ENCODE measurements at regions of chr11 and their contacts with region 1.

Region 1: GRCh38 chr11:85854557-85855340 is 434 bp upstream of the CCDC83 start:
- DNase-seq: peak; percentile 90
- ATAC-seq: peak; percentile 99
- H3K4me3 ChIP-seq: peak overlapping the region; percentile 90
- H3K27ac ChIP-seq: peak overlapping the region; percentile 98
- H3K4me1 ChIP-seq: peaks cover 7% of the 10 kb centered on the region
- H3K27me3 ChIP-seq: no peaks in the 10 kb centered on the region
- CTCF ChIP-seq: peak; percentile 82
- POLR2A ChIP-seq: peak; percentile 69
- RAD21 ChIP-seq: peak; percentile 93

Region 2: GRCh38 chr11:85096939-85097338 is 757.8 kb before region 1 on chr11:
- CTCF ChIA-PET with region 1: no interaction called
- POLR2A ChIA-PET with region 1: no interaction called
- dilution Hi-C with region 1: no loop called
- in situ Hi-C with region 1: no loop called
- intact Hi-C with region 1: no loop called
- DNase-seq: no peak
- ATAC-seq: no peak
- H3K4me3 ChIP-seq: no peak overlapping the region
- H3K27ac ChIP-seq: no peak overlapping the region
- H3K4me1 ChIP-seq: no peaks in the 10 kb centered on the region
- H3K27me3 ChIP-seq: no peaks in the 10 kb centered on the region
- CTCF ChIP-seq: no peak
- POLR2A ChIP-seq: no peak
- RAD21 ChIP-seq: no peak

Region 3: GRCh38 chr11:85694386-85694980 is 160.3 kb before region 1 on chr11:
- CTCF ChIA-PET with region 1: interaction called, 6 read pairs
- POLR2A ChIA-PET with region 1: no interaction called
- dilution Hi-C with region 1: no loop called
- in situ Hi-C with region 1: no loop called
- intact Hi-C with region 1: loop called (anchors 2 kb)
- DNase-seq: peak; percentile 71
- ATAC-seq: peak; percentile 69
- H3K4me3 ChIP-seq: no peak overlapping the region
- H3K27ac ChIP-seq: peak overlapping the region; percentile 63; the same call in 1 of the 2 replicates
- H3K4me1 ChIP-seq: peaks cover 6% of the 10 kb centered on the region
- H3K27me3 ChIP-seq: no peaks in the 10 kb centered on the region
- CTCF ChIP-seq: peak; percentile 67
- POLR2A ChIP-seq: no peak
- RAD21 ChIP-seq: peak; percentile 77

Region 4: DNA sequence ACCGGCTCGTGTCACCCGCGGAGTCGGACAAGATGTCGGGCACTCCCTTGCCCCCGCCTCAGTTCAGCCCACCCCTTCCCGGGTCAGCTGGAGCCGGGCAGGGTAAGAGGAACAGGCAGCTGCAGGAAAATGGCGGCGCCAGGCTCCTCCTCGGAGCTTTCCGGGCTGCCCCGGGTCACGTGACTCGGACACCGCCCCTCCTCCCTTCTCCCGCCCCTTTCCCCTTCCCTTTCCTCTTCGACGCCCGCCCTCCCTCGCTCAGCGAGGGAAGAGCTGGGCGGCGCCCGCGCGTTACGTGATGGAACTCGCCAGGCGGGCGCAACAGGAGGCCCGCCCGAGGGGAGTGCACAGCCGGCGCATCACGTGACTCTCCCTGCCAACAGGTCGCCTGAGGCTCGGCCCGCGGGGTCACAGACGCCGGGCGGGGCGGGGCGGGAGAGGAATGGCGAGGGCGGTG is 214.2 kb after region 1 on chr11 and contains the start of gene PICALM:
- CTCF ChIA-PET with region 1: interaction called, 5 read pairs
- POLR2A ChIA-PET with region 1: no interaction called
- dilution Hi-C with region 1: no loop called
- in situ Hi-C with region 1: no loop called
- intact Hi-C with region 1: loop called (anchors 10 kb)
- DNase-seq: peak; percentile 99
- ATAC-seq: peak; percentile 93
- H3K4me3 ChIP-seq: peak within 1 kb of the TSS; percentile 96
- H3K27ac ChIP-seq: peak within 1 kb of the TSS; percentile 98
- H3K4me1 ChIP-seq: peaks cover 8% of the 10 kb centered on the region
- H3K27me3 ChIP-seq: no peaks in the 10 kb centered on the region
- CTCF ChIP-seq: 0 out of 2 replicates have a peak, but pooled peaks have one; percentile 10
- POLR2A ChIP-seq: peak; percentile 70
- RAD21 ChIP-seq: peak; percentile 29
- total RNA-seq, gene PICALM: 441 and 453 TPM in 2 replicates

Region 5: DNA sequence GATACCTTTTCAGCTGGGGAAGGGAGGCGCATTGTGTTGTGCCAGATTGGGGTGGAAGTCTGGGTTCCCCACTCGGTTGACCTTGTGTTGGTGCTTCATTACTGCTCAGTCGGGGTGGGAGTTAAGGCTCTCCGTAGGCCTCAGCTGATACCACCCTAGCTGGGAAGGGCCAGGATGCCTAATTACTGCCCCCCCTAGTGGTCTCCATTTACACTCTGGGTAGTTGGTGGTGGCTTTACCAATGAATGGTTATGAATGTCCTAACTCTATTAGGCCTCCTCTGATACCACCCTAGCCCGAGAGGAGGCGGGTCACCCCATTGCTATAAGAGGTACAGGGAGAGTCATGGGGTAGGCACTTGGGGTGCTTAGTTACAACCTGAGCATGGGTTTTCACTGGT is 419.8 kb after region 1 on chr11:
- CTCF ChIA-PET with region 1: no interaction called
- POLR2A ChIA-PET with region 1: no interaction called
- dilution Hi-C with region 1: no loop called
- in situ Hi-C with region 1: no loop called
- intact Hi-C with region 1: loop called (anchors 5 kb)
- DNase-seq: no peak
- ATAC-seq: no peak
- H3K4me3 ChIP-seq: no peak overlapping the region
- H3K27ac ChIP-seq: no peak overlapping the region
- H3K4me1 ChIP-seq: peaks cover 3% of the 10 kb centered on the region; the same call in 1 of the 2 replicates
- H3K27me3 ChIP-seq: no peaks in the 10 kb centered on the region
- CTCF ChIP-seq: 0 out of 2 replicates have a peak, but pooled peaks have one; percentile 2
- POLR2A ChIP-seq: no peak
- RAD21 ChIP-seq: no peak

Measured in IMR-90 (cell line).